Activated CD4-positive, alpha-beta T cell treated with anti-CD3 and anti-CD28 coated beads for 36 hours (primary cell): ENCODE measurements at regions of chr19 and their contacts with region 1.

Region 1: GRCh38 chr19:10408511-10409283 is 5.4 kb upstream of the CDC37 start:
- DNase-seq: peak; percentile 84
- ATAC-seq: peak; percentile 73
- H3K4me3 Mint-ChIP-seq: peak overlapping the region; percentile 26
- H3K27ac Mint-ChIP-seq: peak overlapping the region; percentile 73
- H3K4me1 Mint-ChIP-seq: peaks cover 69% of the 10 kb centered on the region
- H3K27me3 Mint-ChIP-seq: no peaks in the 10 kb centered on the region

Region 2: GRCh38 chr19:10424011-10424637 is 15.4 kb after region 1 on chr19:
- CTCF ChIA-PET with region 1: interaction called, 135 read pairs
- POLR2A ChIA-PET with region 1: interaction called, 3 read pairs
- intact Hi-C with region 1: loop called (anchors 1 to 2 kb)
- DNase-seq: peak; percentile 85
- ATAC-seq: peak; percentile 31
- H3K4me3 Mint-ChIP-seq: peak overlapping the region; percentile 47
- H3K27ac Mint-ChIP-seq: no peak overlapping the region
- H3K4me1 Mint-ChIP-seq: peaks cover 72% of the 10 kb centered on the region
- H3K27me3 Mint-ChIP-seq: peaks cover 53% of the 10 kb centered on the region